Aorta (tissue), 5 donors: ENCODE measurements at regions of chr12 and their contacts with region 1.

Region 1: DNA sequence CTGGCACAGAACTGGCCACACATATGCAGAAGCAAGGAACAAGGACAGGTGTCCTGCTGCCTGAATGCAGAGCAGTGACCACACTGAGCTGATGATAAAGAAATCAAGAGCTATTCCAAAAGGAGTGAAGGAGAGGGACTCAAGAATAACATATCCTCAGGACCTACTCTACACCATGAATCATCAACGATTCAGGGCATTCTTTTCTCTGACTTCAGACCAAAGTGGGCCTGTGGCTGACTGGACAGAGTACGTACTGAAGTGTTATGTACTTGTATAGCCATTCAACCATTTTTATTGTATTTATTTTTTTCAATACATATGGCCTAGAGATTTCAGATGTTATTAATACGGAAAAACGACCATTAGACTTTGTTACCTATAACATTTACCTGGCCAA is 177.5 kb upstream of the TMTC1 start:
- DNase-seq: no peak
- ATAC-seq: no peak
- H3K4me3 ChIP-seq: no peak overlapping the region
- H3K27ac ChIP-seq: no peak overlapping the region
- H3K4me1 ChIP-seq: peaks cover 0 to 7% of the 10 kb centered on the region in 2 donors
- H3K27me3 ChIP-seq: no peaks in the 10 kb centered on the region

Region 2: GRCh38 chr12:30006021-30006420 is 44.8 kb after region 1 on chr12:
- intact Hi-C with region 1: loop called (anchors 5 kb)
- DNase-seq: no peak
- ATAC-seq: peak; percentile 81
- H3K4me3 ChIP-seq: peak overlapping the region in 1 of 2 donors; percentile 24
- H3K27ac ChIP-seq: peak overlapping the region in 1 of 2 donors; percentile 86
- H3K4me1 ChIP-seq: peaks cover 5 to 8% of the 10 kb centered on the region in 2 donors
- H3K27me3 ChIP-seq: no peaks in the 10 kb centered on the region

Region 3: GRCh38 chr12:30026621-30027234 is 65.5 kb after region 1 on chr12:
- intact Hi-C with region 1: no loop called
- DNase-seq: no peak
- ATAC-seq: no peak
- H3K4me3 ChIP-seq: no peak overlapping the region
- H3K27ac ChIP-seq: no peak overlapping the region
- H3K4me1 ChIP-seq: peaks cover 0 to 8% of the 10 kb centered on the region in 2 donors
- H3K27me3 ChIP-seq: no peaks in the 10 kb centered on the region

Region 4: DNA sequence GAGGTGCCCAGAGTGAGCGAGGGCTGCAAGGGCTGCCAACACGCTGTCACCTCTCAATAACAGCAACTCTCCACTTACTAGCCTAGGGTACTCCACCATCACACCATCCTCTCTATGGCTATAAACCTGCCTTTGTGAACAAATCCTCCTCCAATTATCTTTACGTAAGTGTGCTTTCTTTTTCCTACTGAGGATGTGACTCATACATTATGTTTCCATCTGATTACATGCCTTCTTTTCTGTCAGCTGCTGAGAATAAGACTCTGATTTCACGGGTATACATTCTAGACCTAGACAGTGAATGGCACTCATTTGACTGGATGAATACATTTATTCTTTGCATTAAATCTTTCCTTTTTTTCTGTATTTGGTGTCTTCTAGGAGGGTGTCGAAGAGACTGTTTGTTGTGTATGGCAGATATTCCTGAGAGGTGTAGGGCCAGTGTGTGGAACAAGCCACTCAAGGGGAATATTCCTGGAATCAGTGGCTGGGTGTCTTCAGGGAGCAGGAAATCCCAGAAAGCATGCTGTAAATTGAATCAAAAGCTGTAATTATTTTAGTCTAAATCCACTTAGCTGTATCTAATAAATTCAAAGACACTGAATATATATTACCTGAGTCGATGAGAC is 149.8 kb after region 1 on chr12:
- intact Hi-C with region 1: no loop called
- DNase-seq: no peak
- ATAC-seq: no peak
- H3K4me3 ChIP-seq: no peak overlapping the region
- H3K27ac ChIP-seq: no peak overlapping the region
- H3K4me1 ChIP-seq: no peaks in the 10 kb centered on the region
- H3K27me3 ChIP-seq: peaks cover 0 to 2% of the 10 kb centered on the region in 2 donors